MCF 10A (cell line): ENCODE measurements at regions of chr7 and their contacts with region 1.

Region 1: GRCh38 chr7:55073945-55074499 is 55.2 kb downstream of the EGFR start:
- DNase-seq: peak; percentile 98
- H3K4me3 Mint-ChIP-seq: peak overlapping the region; percentile 80
- H3K27ac Mint-ChIP-seq: peak overlapping the region; percentile 100
- H3K4me1 Mint-ChIP-seq: peaks cover 34% of the 10 kb centered on the region
- H3K27me3 Mint-ChIP-seq: no peaks in the 10 kb centered on the region
- CTCF ChIP-seq: no peak

Region 2: GRCh38 chr7:54349229-54349628 is 724.8 kb before region 1 on chr7:
- CTCF ChIA-PET with region 1: no interaction called
- POLR2A ChIA-PET with region 1: no interaction called
- intact Hi-C with region 1: no loop called
- DNase-seq: peak; percentile 83
- H3K4me3 Mint-ChIP-seq: no peak overlapping the region
- H3K27ac Mint-ChIP-seq: no peak overlapping the region
- H3K4me1 Mint-ChIP-seq: peaks cover 17% of the 10 kb centered on the region
- H3K27me3 Mint-ChIP-seq: no peaks in the 10 kb centered on the region
- CTCF ChIP-seq: no peak

Region 3: GRCh38 chr7:54831644-54832099 is 242.3 kb before region 1 on chr7:
- CTCF ChIA-PET with region 1: no interaction called
- POLR2A ChIA-PET with region 1: interaction called, 14 read pairs
- intact Hi-C with region 1: loop called (anchors 5 kb)
- DNase-seq: peak; percentile 96
- H3K4me3 Mint-ChIP-seq: peak overlapping the region; percentile 28
- H3K27ac Mint-ChIP-seq: peak overlapping the region; percentile 61
- H3K4me1 Mint-ChIP-seq: peaks cover 21% of the 10 kb centered on the region
- H3K27me3 Mint-ChIP-seq: no peaks in the 10 kb centered on the region
- CTCF ChIP-seq: no peak

Region 4: GRCh38 chr7:54839538-54840213 is 234.3 kb before region 1 on chr7:
- CTCF ChIA-PET with region 1: interaction called, 3 read pairs
- POLR2A ChIA-PET with region 1: no interaction called
- intact Hi-C with region 1: loop called (anchors 5 kb)
- DNase-seq: peak; percentile 81
- H3K4me3 Mint-ChIP-seq: no peak overlapping the region
- H3K27ac Mint-ChIP-seq: no peak overlapping the region
- H3K4me1 Mint-ChIP-seq: peaks cover 29% of the 10 kb centered on the region
- H3K27me3 Mint-ChIP-seq: no peaks in the 10 kb centered on the region
- CTCF ChIP-seq: peak; percentile 80

Region 5: GRCh38 chr7:55053651-55054571 is 20.1 kb before region 1 on chr7:
- CTCF ChIA-PET with region 1: no interaction called
- POLR2A ChIA-PET with region 1: interaction called, 10 read pairs
- intact Hi-C with region 1: no loop called
- DNase-seq: peak; percentile 57
- H3K4me3 Mint-ChIP-seq: peak overlapping the region; percentile 58
- H3K27ac Mint-ChIP-seq: peak overlapping the region; percentile 95
- H3K4me1 Mint-ChIP-seq: peaks cover 80% of the 10 kb centered on the region
- H3K27me3 Mint-ChIP-seq: no peaks in the 10 kb centered on the region
- CTCF ChIP-seq: no peak

Region 6: GRCh38 chr7:55086413-55087201 is 12.6 kb after region 1 on chr7:
- CTCF ChIA-PET with region 1: interaction called, 3 read pairs
- POLR2A ChIA-PET with region 1: interaction called, 14 read pairs
- intact Hi-C with region 1: no loop called
- DNase-seq: peak; percentile 78
- H3K4me3 Mint-ChIP-seq: peak overlapping the region; percentile 68
- H3K27ac Mint-ChIP-seq: peak overlapping the region; percentile 54
- H3K4me1 Mint-ChIP-seq: peaks cover 58% of the 10 kb centered on the region
- H3K27me3 Mint-ChIP-seq: no peaks in the 10 kb centered on the region
- CTCF ChIP-seq: no peak

Region 7: GRCh38 chr7:55110661-55111361 is 36.8 kb after region 1 on chr7:
- CTCF ChIA-PET with region 1: no interaction called
- POLR2A ChIA-PET with region 1: interaction called, 3 read pairs
- intact Hi-C with region 1: loop called (anchors 2 kb)
- DNase-seq: no peak
- H3K4me3 Mint-ChIP-seq: peak overlapping the region; percentile 21
- H3K27ac Mint-ChIP-seq: peak overlapping the region; percentile 84
- H3K4me1 Mint-ChIP-seq: peaks cover 55% of the 10 kb centered on the region
- H3K27me3 Mint-ChIP-seq: no peaks in the 10 kb centered on the region
- CTCF ChIP-seq: no peak

Region 8: DNA sequence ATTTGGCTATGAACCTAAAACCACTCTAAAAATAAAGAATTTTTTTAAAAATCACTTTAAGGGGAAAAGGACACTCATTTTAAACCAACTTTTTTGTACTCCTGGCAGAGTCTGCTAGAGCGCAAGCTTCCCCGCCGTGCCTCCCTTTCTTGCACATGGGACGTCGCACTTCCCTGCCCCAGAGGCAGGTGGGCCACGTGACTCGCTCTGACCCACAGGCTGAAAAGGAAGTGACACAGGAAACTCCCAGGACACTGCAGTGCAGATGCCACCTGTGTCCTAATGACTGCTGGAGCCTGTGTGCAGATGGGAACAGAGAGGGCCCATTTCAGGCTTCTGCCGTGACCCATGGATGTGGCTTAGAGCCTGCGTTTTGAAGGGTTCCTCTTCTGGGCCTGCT is 149.0 kb after region 1 on chr7:
- CTCF ChIA-PET with region 1: no interaction called
- POLR2A ChIA-PET with region 1: no interaction called
- intact Hi-C with region 1: no loop called
- DNase-seq: no peak
- H3K4me3 Mint-ChIP-seq: no peak overlapping the region
- H3K27ac Mint-ChIP-seq: no peak overlapping the region
- H3K4me1 Mint-ChIP-seq: no peaks in the 10 kb centered on the region
- H3K27me3 Mint-ChIP-seq: peaks cover 42% of the 10 kb centered on the region
- CTCF ChIP-seq: no peak